AG04450 (cell line): ENCODE measurements at regions of chr5 and their contacts with region 1.

Region 1: GRCh38 chr5:33299621-33300208 is 141.1 kb upstream of the TARS1 start:
- DNase-seq: peak; percentile 26
- H3K4me3 ChIP-seq: no peak overlapping the region
- H3K27ac ChIP-seq: no peak overlapping the region
- H3K27me3 ChIP-seq: no peaks in the 10 kb centered on the region
- CTCF ChIP-seq: peak; percentile 62

Region 2: GRCh38 chr5:33310451-33310850 is 10.7 kb after region 1 on chr5:
- CTCF ChIA-PET with region 1: interaction called, 44 read pairs
- POLR2A ChIA-PET with region 1: no interaction called
- DNase-seq: peak; percentile 66
- H3K4me3 ChIP-seq: no peak overlapping the region
- H3K27ac ChIP-seq: peak overlapping the region; percentile 65
- H3K27me3 ChIP-seq: no peaks in the 10 kb centered on the region
- CTCF ChIP-seq: no peak

Region 3: GRCh38 chr5:33736510-33736909 is 436.8 kb after region 1 on chr5:
- CTCF ChIA-PET with region 1: no interaction called
- POLR2A ChIA-PET with region 1: no interaction called
- DNase-seq: peak; percentile 75
- H3K4me3 ChIP-seq: no peak overlapping the region
- H3K27ac ChIP-seq: peak overlapping the region; percentile 33
- H3K27me3 ChIP-seq: no peaks in the 10 kb centered on the region
- CTCF ChIP-seq: no peak